Spleen (tissue), 13 donors: ENCODE measurements at regions of chr13 and their contacts with region 1.

Region 1: GRCh38 chr13:49300739-49301589 is 53.2 kb downstream of the CDADC1 start:
- DNase-seq: peak; percentile 82
- H3K4me3 ChIP-seq: peak overlapping the region in 4 of 8 donors; percentile 9 to 60 (median 22)
- H3K27ac ChIP-seq: peak overlapping the region in 5 of 8 donors; percentile 39 to 69 (median 48)
- H3K4me1 ChIP-seq: peaks cover 0 to 36% (median 24%) of the 10 kb centered on the region in 6 donors
- H3K27me3 ChIP-seq: no peaks in the 10 kb centered on the region
- CTCF ChIP-seq: peak; percentile 73 to 95 (median 86)
- POLR2A ChIP-seq: no peak

Region 2: DNA sequence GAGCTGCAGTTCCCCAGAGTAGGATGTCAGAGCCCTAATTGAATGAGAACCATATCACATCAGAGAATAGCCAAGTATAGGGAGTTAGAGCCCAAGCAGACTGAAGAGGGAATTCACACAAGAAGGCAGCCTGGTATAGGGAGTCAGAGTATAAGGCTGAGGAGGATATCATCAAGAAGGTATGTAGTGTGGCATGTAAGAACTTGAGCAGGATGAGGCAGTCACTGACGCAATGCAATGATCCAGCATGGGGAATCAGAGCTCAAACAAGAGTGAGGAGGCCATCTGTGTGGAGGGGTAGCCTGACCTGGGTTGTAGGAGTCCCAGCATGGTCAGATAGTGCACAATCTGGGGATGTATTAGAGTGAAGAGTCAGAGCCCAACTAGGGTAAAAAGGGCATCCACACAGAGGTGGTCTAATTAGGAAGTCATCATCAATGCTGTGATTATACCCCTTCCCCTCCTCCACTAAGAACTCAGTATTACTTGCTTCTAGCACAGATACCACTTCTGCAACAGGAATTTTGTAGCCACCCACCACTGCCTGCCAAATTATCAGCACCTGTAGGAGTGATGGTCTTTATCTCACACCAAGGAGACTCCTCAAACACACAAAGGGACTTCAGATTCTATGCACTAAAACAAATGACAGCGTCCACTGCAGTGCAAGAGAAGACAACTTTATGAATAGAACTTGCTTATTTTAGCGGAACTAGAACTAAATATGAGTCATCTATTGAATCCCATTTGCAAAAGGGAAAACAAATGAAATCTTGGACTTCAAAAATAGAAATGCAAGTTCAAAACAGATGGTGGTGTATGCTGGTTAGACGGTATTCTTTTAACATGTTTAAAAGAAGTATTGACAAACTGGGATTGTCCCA is 218.1 kb before region 1 on chr13:
- intact Hi-C with region 1: no loop called
- DNase-seq: no peak
- H3K4me3 ChIP-seq: no peak overlapping the region
- H3K27ac ChIP-seq: no peak overlapping the region
- H3K4me1 ChIP-seq: peaks cover 0 to 9% (median 7%) of the 10 kb centered on the region in 6 donors
- H3K27me3 ChIP-seq: no peaks in the 10 kb centered on the region
- CTCF ChIP-seq: no peak
- POLR2A ChIP-seq: no peak

Region 3: GRCh38 chr13:49444524-49445395 is 143.8 kb after region 1 on chr13:
- intact Hi-C with region 1: loop called (anchors 5 kb)
- DNase-seq: no peak
- H3K4me3 ChIP-seq: peak overlapping the region; percentile 70 to 95 (median 86)
- H3K27ac ChIP-seq: peak overlapping the region; percentile 94 to 98 (median 98)
- H3K4me1 ChIP-seq: peaks cover 17 to 59% (median 52%) of the 10 kb centered on the region in 6 donors
- H3K27me3 ChIP-seq: no peaks in the 10 kb centered on the region
- CTCF ChIP-seq: no peak
- POLR2A ChIP-seq: peak in 1 of 3 donors; percentile 34

Region 4: GRCh38 chr13:49606747-49607648 is 306.0 kb after region 1 on chr13:
- intact Hi-C with region 1: loop called (anchors 5 kb)
- DNase-seq: peak; percentile 95
- H3K4me3 ChIP-seq: peak overlapping the region in 6 of 8 donors; percentile 4 to 50 (median 28)
- H3K27ac ChIP-seq: peak overlapping the region in 5 of 8 donors; percentile 30 to 66 (median 46)
- H3K4me1 ChIP-seq: peaks cover 0 to 27% (median 16%) of the 10 kb centered on the region in 6 donors
- H3K27me3 ChIP-seq: no peaks in the 10 kb centered on the region
- CTCF ChIP-seq: peak; percentile 64 to 85 (median 77)
- POLR2A ChIP-seq: no peak